MCF 10A (cell line): ENCODE measurements at regions of chr15 and their contacts with region 1.

Region 1: GRCh38 chr15:55917881-55918296 is 75.5 kb downstream of the NEDD4 start:
- DNase-seq: peak; percentile 88
- H3K4me3 Mint-ChIP-seq: no peak overlapping the region
- H3K27ac Mint-ChIP-seq: peak overlapping the region; percentile 67
- H3K4me1 Mint-ChIP-seq: peaks cover 17% of the 10 kb centered on the region
- H3K27me3 Mint-ChIP-seq: no peaks in the 10 kb centered on the region
- CTCF ChIP-seq: peak; percentile 52

Region 2: DNA sequence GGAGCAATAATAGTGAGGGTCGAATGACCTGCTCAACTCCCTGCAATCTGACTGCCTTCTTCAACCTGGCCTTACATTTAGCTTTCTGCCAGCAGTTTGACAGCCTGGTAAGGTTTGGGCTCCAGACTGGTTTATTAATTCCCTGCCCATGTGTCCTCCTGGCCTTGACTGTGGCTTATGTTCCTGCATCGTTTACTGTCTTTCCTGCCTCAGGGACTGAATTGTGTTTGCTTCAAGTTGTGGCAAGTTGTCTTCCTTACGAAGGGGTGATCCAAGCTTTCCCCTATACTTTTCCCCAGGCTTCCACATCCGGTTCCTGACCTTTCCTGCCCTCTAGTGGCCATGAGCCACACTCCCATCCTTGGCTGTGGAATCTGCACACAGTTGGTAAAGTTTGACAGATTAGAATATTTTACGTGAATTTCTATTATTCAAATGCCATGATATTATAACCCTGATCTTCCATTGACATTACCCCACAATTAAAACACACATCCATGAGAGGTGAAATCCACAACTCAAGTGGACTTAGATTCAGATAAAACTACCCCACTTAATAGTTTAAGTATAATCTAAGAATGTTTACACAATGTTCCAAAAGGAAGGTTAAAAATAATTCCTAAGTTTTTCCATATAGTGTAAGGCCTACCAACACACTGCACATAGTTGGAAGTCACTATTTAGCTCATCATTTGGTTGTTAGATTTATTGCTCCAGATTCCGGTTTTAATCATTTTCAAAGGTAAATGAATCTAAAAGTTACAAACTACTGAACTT is 20.1 kb before region 1 on chr15:
- CTCF ChIA-PET with region 1: interaction called, 59 read pairs
- POLR2A ChIA-PET with region 1: interaction called, 99 read pairs
- intact Hi-C with region 1: no loop called
- DNase-seq: peak; percentile 87
- H3K4me3 Mint-ChIP-seq: peak overlapping the region; percentile 45
- H3K27ac Mint-ChIP-seq: peak overlapping the region; percentile 92
- H3K4me1 Mint-ChIP-seq: peaks cover 21% of the 10 kb centered on the region
- H3K27me3 Mint-ChIP-seq: no peaks in the 10 kb centered on the region
- CTCF ChIP-seq: peak; percentile 73

Region 3: DNA sequence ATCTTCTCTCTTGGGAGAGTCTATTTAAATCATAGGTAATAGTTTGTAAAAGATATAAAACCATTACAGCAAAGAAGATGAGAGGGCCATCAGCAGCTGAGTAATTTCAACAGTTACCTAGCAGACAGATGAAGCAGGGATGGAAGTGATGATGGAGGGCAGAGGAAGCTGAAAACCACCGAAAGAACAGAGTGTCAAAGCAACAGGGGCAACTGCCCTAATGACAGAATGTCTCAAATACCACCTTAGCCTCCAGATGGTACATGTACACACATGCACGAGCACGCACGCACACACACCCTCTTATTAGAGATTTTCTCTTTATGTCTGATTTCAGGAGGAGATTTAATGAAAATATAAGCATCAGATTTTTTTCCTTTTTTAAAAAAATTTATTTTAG is 11.1 kb after region 1 on chr15:
- CTCF ChIA-PET with region 1: interaction called, 9 read pairs
- POLR2A ChIA-PET with region 1: interaction called, 16 read pairs
- intact Hi-C with region 1: no loop called
- DNase-seq: no peak
- H3K4me3 Mint-ChIP-seq: no peak overlapping the region
- H3K27ac Mint-ChIP-seq: no peak overlapping the region
- H3K4me1 Mint-ChIP-seq: no peaks in the 10 kb centered on the region
- H3K27me3 Mint-ChIP-seq: no peaks in the 10 kb centered on the region
- CTCF ChIP-seq: no peak

Region 4: DNA sequence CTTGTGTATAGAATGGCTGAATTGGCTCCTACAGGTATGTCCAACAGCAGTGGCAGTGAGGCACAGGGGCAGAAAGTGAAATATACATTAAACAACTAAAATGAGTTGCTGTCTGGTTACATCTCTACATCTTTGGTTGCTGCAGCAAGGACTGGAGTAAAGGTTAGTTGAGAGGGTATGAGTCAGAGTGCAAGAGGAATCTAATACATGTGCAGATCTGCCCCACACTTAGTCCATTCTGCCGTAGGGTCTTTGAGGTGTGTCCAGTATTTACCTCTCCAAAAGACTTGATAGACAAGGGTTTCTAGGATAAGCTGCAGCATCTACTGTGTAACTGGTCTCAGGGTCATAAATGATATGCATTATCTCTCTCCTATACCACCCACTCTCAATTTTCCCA is 81.7 kb after region 1 on chr15:
- CTCF ChIA-PET with region 1: interaction called, 25 read pairs
- POLR2A ChIA-PET with region 1: interaction called, 65 read pairs
- intact Hi-C with region 1: no loop called
- DNase-seq: peak; percentile 80
- H3K4me3 Mint-ChIP-seq: no peak overlapping the region
- H3K27ac Mint-ChIP-seq: peak overlapping the region; percentile 24
- H3K4me1 Mint-ChIP-seq: peaks cover 53% of the 10 kb centered on the region
- H3K27me3 Mint-ChIP-seq: no peaks in the 10 kb centered on the region
- CTCF ChIP-seq: no peak

Region 5: GRCh38 chr15:56052395-56053045 is 134.6 kb after region 1 on chr15:
- CTCF ChIA-PET with region 1: interaction called, 5 read pairs
- POLR2A ChIA-PET with region 1: interaction called, 10 read pairs
- intact Hi-C with region 1: loop called (anchors 1 kb)
- DNase-seq: peak; percentile 58
- H3K4me3 Mint-ChIP-seq: no peak overlapping the region
- H3K27ac Mint-ChIP-seq: no peak overlapping the region
- H3K4me1 Mint-ChIP-seq: peaks cover 15% of the 10 kb centered on the region
- H3K27me3 Mint-ChIP-seq: no peaks in the 10 kb centered on the region
- CTCF ChIP-seq: peak; percentile 51